ENCODE measurements at regions of chr19 and their contacts with region 1.

Region 1: GRCh38 chr19:9674663-9675357 is at the start of gene ZNF562:
- DNase-seq: peak; percentile 81 to 95 (median 90)

Region 2: DNA sequence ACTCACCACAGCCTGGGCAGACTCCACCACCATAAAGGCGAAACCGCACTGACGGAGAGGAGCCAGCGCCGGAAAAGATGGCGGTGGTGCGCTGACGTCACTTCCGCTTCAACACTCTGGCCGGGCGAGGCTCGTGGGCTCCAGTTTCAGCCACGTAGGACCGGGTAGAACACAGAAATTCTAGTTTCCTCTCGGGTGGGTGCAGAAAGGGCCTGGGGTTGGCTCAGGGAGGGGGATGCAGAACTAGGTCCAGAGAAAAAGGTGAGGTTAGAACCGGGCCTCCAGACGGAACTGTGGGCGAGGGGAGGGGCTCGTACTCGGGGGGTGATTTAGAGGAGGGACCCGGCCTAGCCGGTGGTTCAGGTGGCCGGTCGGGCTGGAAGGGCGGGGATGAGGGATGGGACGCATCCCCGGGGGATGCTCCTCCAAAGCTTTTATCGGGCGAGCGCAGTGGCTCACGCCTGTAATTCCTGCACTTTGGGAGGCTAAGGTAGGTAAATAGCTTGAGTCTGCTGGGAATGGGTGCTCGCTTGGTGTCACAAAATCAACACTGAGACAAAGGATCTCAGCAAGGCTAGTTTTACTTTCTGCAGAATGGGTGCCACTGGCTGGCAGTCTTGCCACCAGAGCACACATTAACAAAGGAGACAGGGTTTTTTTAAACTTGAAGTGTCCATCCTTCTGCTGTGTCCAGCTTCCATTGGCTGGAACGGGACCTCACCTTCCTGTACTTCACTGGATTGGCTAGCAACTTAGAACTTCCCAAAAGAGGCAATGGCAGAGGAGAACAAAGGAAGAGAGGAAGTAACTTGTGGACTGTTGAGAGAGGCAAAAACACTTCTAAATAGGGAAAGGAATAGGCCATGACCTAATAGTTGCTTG is 53.4 kb before region 1 on chr19 and contains the start of gene ZNF561:
- intact Hi-C with region 1: loop called (anchors 10 kb)
- DNase-seq: peak; percentile 73 to 96 (median 90)

Measured in head of caudate nucleus (tissue), 42 donors.